RWPE1 (cell line): ENCODE measurements at regions of chr11 and their contacts with region 1.

Region 1: DNA sequence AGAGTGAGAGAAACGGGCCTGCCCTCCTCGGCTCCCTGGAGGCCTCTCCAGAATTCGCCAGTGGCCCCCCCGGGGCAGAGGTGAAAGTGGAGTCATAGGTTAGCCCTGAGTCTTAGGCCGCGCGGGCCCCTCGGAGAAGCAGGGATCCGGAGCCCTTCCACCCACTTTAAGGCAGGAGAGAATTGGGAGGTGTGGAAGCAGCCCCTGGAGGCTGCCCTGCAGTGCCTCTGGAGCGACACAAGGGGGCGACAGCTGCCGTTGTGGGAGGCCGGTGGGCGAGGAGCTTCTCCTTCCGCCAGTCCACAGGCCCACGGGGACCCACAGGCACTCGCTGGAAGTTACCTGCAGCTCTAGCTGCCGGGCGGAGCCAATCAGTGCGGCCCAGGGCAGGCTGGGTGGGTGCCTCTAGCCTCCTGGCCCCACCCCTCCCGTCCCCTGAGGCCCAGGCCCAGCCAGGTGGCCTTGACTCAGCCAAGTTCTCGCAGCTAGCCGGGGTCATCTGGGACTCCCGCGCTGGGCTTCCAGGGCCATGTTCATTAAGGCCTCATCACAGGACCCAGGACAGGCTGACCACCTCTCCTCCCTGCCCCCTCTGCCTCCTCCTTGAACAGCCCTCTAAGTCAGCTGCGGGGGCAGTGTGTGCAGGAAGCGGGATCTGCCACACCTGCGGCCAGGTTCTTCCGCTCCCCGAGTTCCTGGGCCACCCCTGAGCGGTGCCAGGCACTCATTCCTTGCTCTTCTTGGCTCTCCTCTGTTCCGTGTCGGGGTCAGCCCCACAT is 5.0 kb downstream of the DGKZ start:
- DNase-seq: no peak
- H3K27ac ChIP-seq: peak overlapping the region; percentile 63
- CTCF ChIP-seq: peak; percentile 69

Region 2: GRCh38 chr11:46367244-46367915 is 15.1 kb after region 1 on chr11:
- CTCF ChIA-PET with region 1: interaction called, 20 read pairs
- POLR2A ChIA-PET with region 1: interaction called, 3 read pairs
- DNase-seq: no peak
- H3K27ac ChIP-seq: peak overlapping the region; percentile 85
- CTCF ChIP-seq: peak; percentile 77